ENCODE measurements at regions of chr21 and their contacts with region 1.

Region 1: DNA sequence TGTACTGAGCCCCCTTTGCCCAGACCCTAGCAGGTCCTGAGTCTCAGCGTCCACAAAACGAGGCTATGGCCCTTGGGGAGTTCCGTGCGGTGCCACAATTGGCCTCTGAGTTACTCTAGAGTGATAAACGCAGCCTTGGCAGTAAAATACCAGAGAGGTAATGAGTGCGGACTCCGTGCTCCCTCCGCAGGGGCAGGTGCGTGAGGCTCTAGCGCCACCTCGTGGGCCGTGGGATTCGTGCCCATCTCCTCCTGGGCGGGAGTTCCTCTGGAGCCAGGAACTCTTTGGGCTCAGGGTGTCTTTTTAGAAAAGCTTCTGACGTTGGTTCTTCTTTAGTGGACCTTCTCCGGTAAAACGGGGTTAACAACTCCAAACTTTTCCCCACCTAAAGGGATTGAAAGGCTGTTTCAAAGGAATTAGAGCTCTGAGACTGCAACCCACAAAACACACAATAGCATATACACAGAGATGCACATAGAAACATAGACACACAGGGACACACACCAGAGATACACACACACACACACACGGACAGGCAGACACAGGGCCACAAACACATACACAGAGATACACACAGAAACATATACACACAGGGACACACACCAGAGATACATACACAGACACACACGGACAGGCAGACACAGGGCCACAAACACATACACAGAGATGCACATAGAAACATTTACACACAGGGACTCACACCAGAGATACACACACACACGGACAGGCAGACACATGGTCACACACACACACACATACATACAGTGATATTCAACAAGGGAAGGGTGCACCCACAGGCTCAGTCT is 99.4 kb downstream of the KCNJ15 start:
- DNase-seq: peak; percentile 23
- ATAC-seq: peak; percentile 93
- H3K4me3 ChIP-seq: no peak overlapping the region
- H3K27ac ChIP-seq: no peak overlapping the region
- H3K4me1 ChIP-seq: no peaks in the 10 kb centered on the region; a peak in 1 of 4 replicates
- H3K27me3 ChIP-seq: no peaks in the 10 kb centered on the region
- CTCF ChIP-seq: peak; percentile 55 to 94 (median 89)
- POLR2A ChIP-seq: no peak
- RAD21 ChIP-seq: peak; percentile 80

Region 2: GRCh38 chr21:37700641-37701202 is 655.5 kb before region 1 on chr21:
- CTCF ChIA-PET with region 1: interaction called, 8 read pairs
- POLR2A ChIA-PET with region 1: no interaction called
- RAD21 ChIA-PET with region 1: no interaction called
- intact Hi-C with region 1: loop called (anchors 1 kb)
- DNase-seq: peak; percentile 73
- ATAC-seq: peak; percentile 100
- H3K4me3 ChIP-seq: no peak overlapping the region
- H3K27ac ChIP-seq: no peak overlapping the region
- H3K4me1 ChIP-seq: no peaks in the 10 kb centered on the region
- H3K27me3 ChIP-seq: peaks cover 15% of the 10 kb centered on the region; the same call in 1 of the 2 replicates
- CTCF ChIP-seq: peak; percentile 34 to 80 (median 75); a peak in 4 of 6 replicates
- POLR2A ChIP-seq: no peak
- RAD21 ChIP-seq: peak; percentile 60

Region 3: DNA sequence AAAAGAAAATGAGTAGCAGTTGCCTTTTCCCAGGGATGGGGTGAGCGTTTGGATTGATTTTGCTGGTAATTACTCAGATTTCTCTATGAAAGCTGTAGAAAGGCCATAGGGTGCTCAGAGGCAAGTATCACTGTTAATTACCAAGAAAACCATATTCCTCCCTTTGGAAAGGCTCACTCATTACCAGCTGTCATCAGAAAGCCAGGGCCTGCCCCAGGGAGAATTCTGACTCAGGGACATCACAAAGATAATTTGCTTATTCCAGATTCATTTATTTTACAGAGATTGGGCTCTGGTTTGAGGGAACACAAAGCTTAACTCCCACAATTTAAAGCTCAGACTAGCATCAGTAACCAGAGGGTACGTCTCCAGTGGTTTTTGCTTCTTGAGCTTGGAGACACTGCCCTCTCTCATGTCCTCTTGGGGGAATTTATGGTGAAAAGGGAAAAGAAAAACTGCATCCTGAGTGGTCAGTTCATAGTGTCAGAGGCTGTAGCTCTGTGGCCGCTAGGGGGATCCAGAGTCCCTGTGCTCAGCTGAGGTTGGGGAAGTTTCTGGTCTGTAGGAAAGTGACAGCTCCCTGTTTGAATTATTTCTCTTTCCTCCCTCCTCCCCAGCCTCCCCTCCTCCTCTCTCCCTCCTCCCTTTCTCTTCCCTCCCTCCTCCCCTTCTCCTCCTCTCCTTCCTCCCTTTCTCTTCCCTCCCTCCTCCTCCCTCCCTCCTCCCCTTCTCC is 644.2 kb before region 1 on chr21:
- CTCF ChIA-PET with region 1: interaction called, 7 read pairs
- POLR2A ChIA-PET with region 1: no interaction called
- RAD21 ChIA-PET with region 1: no interaction called
- intact Hi-C with region 1: loop called (anchors 5 kb)
- DNase-seq: peak; percentile 53
- ATAC-seq: peak; percentile 99
- H3K4me3 ChIP-seq: no peak overlapping the region
- H3K27ac ChIP-seq: no peak overlapping the region
- H3K4me1 ChIP-seq: no peaks in the 10 kb centered on the region
- H3K27me3 ChIP-seq: no peaks in the 10 kb centered on the region
- CTCF ChIP-seq: peak; percentile 32 to 96 (median 82); a peak in 5 of 6 replicates
- POLR2A ChIP-seq: no peak
- RAD21 ChIP-seq: peak; percentile 67

Region 4: GRCh38 chr21:37751268-37751975 is 604.8 kb before region 1 on chr21:
- CTCF ChIA-PET with region 1: no interaction called
- POLR2A ChIA-PET with region 1: no interaction called
- RAD21 ChIA-PET with region 1: no interaction called
- intact Hi-C with region 1: no loop called
- DNase-seq: no peak
- ATAC-seq: no peak
- H3K4me3 ChIP-seq: no peak overlapping the region
- H3K27ac ChIP-seq: no peak overlapping the region
- H3K4me1 ChIP-seq: no peaks in the 10 kb centered on the region
- H3K27me3 ChIP-seq: peaks cover 47% of the 10 kb centered on the region
- CTCF ChIP-seq: no peak
- POLR2A ChIP-seq: no peak
- RAD21 ChIP-seq: no peak

Region 5: DNA sequence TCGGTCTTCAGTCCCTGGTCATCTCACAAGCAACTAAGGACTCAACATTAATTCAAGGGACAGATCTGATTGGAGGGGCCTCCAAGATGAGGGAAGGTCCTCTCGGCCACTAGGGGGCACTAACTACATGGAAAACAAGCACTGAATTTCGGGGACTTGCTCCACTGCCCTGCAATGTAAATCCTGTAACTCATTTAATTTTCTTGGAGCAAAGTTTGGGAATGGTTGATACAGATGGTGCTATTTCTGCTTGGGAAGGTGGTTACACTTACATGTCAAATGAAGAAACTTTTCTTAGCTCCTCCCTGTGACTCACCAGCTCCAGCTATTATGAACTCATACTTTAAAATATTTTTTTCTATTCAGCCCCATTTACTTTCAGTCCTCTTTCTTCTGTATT is 196.8 kb before region 1 on chr21:
- CTCF ChIA-PET with region 1: interaction called, 3 read pairs
- POLR2A ChIA-PET with region 1: no interaction called
- RAD21 ChIA-PET with region 1: no interaction called
- intact Hi-C with region 1: loop called (anchors 2 kb)
- DNase-seq: peak; percentile 28
- ATAC-seq: peak; percentile 58
- H3K4me3 ChIP-seq: no peak overlapping the region
- H3K27ac ChIP-seq: no peak overlapping the region
- H3K4me1 ChIP-seq: no peaks in the 10 kb centered on the region
- H3K27me3 ChIP-seq: no peaks in the 10 kb centered on the region
- CTCF ChIP-seq: peak in 2 of 3 experiments; percentile 63 to 74; a peak in 4 of 6 replicates
- POLR2A ChIP-seq: no peak
- RAD21 ChIP-seq: no peak

Region 6: DNA sequence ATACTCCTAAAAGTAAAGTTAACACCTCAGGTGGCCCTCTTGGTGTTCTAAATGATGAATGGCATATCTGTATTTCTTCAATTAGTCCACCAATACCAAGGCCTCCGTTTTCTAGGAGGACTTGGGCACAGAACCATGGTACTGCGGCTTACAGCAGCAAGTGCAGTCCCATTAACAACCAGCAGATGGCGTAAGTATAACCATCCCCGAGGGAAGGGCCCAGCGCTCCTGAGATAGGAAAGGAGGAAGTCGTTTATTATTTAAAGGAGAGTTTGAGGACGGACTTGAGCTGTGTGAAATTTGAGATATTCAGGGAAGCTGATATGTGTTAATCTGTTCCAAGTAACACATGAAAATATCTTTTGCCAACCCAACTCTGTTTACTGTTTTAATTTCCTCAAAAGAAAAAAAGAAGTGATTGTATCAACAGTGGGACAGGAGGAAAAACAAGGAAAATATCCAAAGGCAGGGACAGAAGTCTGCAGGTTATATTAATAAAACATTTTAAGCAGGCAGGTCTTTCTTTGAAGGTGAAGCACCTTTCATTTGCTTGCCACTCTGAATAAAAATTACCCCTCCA is 137.1 kb before region 1 on chr21:
- CTCF ChIA-PET with region 1: interaction called, 14 read pairs
- POLR2A ChIA-PET with region 1: no interaction called
- RAD21 ChIA-PET with region 1: no interaction called
- intact Hi-C with region 1: loop called (anchors 1 kb)
- DNase-seq: peak; percentile 21
- ATAC-seq: peak; percentile 82
- H3K4me3 ChIP-seq: no peak overlapping the region
- H3K27ac ChIP-seq: no peak overlapping the region
- H3K4me1 ChIP-seq: no peaks in the 10 kb centered on the region
- H3K27me3 ChIP-seq: no peaks in the 10 kb centered on the region
- CTCF ChIP-seq: peak; percentile 18 to 89 (median 84); a peak in 5 of 6 replicates
- POLR2A ChIP-seq: no peak
- RAD21 ChIP-seq: peak; percentile 45

Measured in HCT116 (cell line).